Activated CD4-positive, alpha-beta T cell treated with anti-CD3 and anti-CD28 coated beads, Interleukin-2, amount 10 ng/mL, durations not matched to agents 7 days and 5 days (primary cell): ENCODE measurements at regions of chr14 and their contacts with region 1.

Region 1: GRCh38 chr14:21455911-21456667 is at the start of gene CHD8:
- DNase-seq: peak; percentile 100
- H3K4me3 Mint-ChIP-seq: peak within 1 kb of the TSS; percentile 92
- H3K27ac Mint-ChIP-seq: peak within 1 kb of the TSS; percentile 99
- H3K4me1 Mint-ChIP-seq: peaks cover 36% of the 10 kb centered on the region
- H3K27me3 Mint-ChIP-seq: no peaks in the 10 kb centered on the region
- total RNA-seq, gene CHD8: 123 to 127 TPM

Region 2: GRCh38 chr14:21408147-21408546 is 47.9 kb before region 1 on chr14:
- CTCF ChIA-PET with region 1: no interaction called
- POLR2A ChIA-PET with region 1: no interaction called
- DNase-seq: no peak
- H3K4me3 Mint-ChIP-seq: no peak overlapping the region
- H3K27ac Mint-ChIP-seq: no peak overlapping the region
- H3K4me1 Mint-ChIP-seq: no peaks in the 10 kb centered on the region
- H3K27me3 Mint-ChIP-seq: no peaks in the 10 kb centered on the region

Region 3: DNA sequence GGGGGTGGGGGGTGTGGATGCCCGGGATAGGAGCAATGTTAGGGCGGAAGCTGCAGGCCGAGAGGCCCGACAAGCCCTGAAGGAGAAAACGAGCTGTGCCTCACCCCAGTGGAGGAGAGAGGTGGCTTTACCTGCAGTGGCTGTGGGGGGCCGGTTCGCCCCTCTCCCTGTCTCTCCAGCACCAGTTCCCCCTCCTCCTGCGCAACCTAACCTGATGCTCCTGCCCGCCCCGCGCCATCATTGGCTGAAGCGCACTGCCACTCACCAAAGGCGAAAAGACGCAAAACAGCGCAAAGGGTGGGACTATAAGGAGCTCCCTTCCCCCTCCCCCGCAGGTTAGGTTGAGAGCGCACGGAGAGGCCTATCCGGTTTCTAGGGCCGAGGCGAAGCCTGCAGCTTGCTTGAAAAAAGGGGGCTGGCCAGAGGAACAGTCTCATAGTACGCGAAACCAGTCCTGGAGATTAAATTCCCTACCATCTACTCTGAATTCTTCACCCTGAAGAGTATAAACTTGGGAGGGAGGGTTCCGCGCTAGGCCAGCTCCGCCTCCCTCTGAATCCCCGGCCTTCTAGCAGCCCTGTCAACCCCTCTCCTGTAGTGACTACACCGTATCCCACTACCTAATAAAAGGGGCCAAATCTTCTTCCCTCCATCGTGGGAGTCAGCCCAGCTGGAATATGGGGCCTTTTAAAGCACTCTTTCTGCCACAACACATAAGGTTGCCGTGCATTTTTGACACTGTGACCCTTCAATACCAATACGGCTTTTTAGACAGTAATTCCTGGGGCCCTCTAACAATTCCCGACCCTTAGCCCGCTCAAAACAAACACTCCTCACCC is 18.8 kb before region 1 on chr14:
- CTCF ChIA-PET with region 1: interaction called, 25 read pairs
- POLR2A ChIA-PET with region 1: interaction called, 20 read pairs
- DNase-seq: peak; percentile 99
- H3K4me3 Mint-ChIP-seq: peak overlapping the region; percentile 88
- H3K27ac Mint-ChIP-seq: peak overlapping the region; percentile 90
- H3K4me1 Mint-ChIP-seq: peaks cover 60% of the 10 kb centered on the region
- H3K27me3 Mint-ChIP-seq: no peaks in the 10 kb centered on the region

Region 4: GRCh38 chr14:21467616-21468015 is 11.5 kb after region 1 on chr14:
- CTCF ChIA-PET with region 1: interaction called, 19 read pairs
- POLR2A ChIA-PET with region 1: no interaction called
- DNase-seq: no peak
- H3K4me3 Mint-ChIP-seq: no peak overlapping the region
- H3K27ac Mint-ChIP-seq: no peak overlapping the region
- H3K4me1 Mint-ChIP-seq: peaks cover 2% of the 10 kb centered on the region
- H3K27me3 Mint-ChIP-seq: no peaks in the 10 kb centered on the region